Adrenal gland (tissue), 19 donors: ENCODE measurements at regions of chr10 and their contacts with region 1.

Region 1: GRCh38 chr10:34637418-34637911 is 177.6 kb downstream of the PARD3 start:
- DNase-seq: peak; percentile 47 to 85 (median 64)
- H3K4me3 ChIP-seq: peak overlapping the region in 1 of 4 donors; percentile 4
- H3K27ac ChIP-seq: no peak overlapping the region
- H3K4me1 ChIP-seq: peaks cover 0 to 25% of the 10 kb centered on the region in 2 donors
- H3K27me3 ChIP-seq: no peaks in the 10 kb centered on the region
- CTCF ChIP-seq: peak; percentile 83 to 96 (median 88)
- POLR2A ChIP-seq: no peak

Region 2: GRCh38 chr10:33193057-33193700 is 1444.3 kb before region 1 on chr10:
- intact Hi-C with region 1: loop called in 1 of 2 experiments (anchors 10 kb)
- DNase-seq: peak; percentile 82 to 95 (median 89)
- H3K4me3 ChIP-seq: no peak overlapping the region
- H3K27ac ChIP-seq: peak overlapping the region in 2 of 5 donors; percentile 17 to 70
- H3K4me1 ChIP-seq: peaks cover 11 to 48% of the 10 kb centered on the region in 2 donors
- H3K27me3 ChIP-seq: no peaks in the 10 kb centered on the region
- CTCF ChIP-seq: peak; percentile 42 to 83 (median 70)
- POLR2A ChIP-seq: no peak

Region 3: GRCh38 chr10:34530778-34531177 is 106.7 kb before region 1 on chr10:
- intact Hi-C with region 1: loop called in 1 of 2 experiments (anchors 5 kb)
- DNase-seq: no peak
- H3K4me3 ChIP-seq: no peak overlapping the region
- H3K27ac ChIP-seq: no peak overlapping the region
- H3K4me1 ChIP-seq: peaks cover 9 to 27% of the 10 kb centered on the region in 2 donors
- H3K27me3 ChIP-seq: no peaks in the 10 kb centered on the region
- CTCF ChIP-seq: no peak
- POLR2A ChIP-seq: no peak